Vagina (tissue), 2 donors: ENCODE measurements at regions of chr11 and their contacts with region 1.

Region 1: DNA sequence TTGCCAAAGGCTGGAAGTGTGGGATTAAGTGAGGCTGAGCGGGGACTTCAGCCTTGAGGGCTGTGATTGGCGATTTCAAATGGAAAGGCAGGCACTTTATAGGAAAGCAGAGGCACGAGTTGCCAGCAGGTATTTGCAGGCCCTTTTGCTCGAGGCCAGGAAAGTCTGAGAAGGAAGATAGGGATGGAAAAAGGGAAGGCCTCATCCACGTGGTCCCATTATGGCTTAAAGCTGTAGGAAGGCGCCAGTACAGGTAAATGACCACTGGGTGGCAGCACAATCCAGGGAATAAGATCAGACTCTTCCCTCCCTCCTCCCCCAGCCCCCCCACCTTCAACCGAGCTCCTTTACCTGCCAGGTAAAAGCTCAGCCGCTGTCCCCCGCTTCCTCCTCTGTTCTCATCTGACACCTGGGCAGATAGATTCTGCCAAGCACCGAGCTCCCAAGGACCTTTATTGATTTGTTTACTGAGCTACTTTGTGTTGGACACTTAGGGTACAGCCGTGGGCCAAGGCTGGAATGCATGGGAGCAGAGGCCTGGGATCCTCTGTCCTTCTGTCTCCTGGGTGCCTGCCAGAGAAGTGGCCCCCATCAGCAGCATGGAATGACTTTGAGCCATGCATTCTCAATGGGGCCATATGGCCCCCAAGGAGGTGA is 7.5 kb downstream of the P2RX3 start:
- DNase-seq: no peak
- H3K4me3 ChIP-seq: no peak overlapping the region
- H3K27ac ChIP-seq: no peak overlapping the region
- H3K4me1 ChIP-seq: peaks cover 7% of the 10 kb centered on the region
- H3K27me3 ChIP-seq: no peaks in the 10 kb centered on the region
- CTCF ChIP-seq: peak; percentile 23 to 67 (median 54)
- POLR2A ChIP-seq: no peak

Region 2: GRCh38 chr11:57499413-57499982 is 153.8 kb after region 1 on chr11:
- intact Hi-C with region 1: loop called (anchors 10 kb)
- DNase-seq: peak in 1 of 2 donors; percentile 94
- H3K4me3 ChIP-seq: peak overlapping the region; percentile 33 to 34
- H3K27ac ChIP-seq: peak overlapping the region; percentile 85
- H3K4me1 ChIP-seq: peaks cover 25% of the 10 kb centered on the region
- H3K27me3 ChIP-seq: no peaks in the 10 kb centered on the region
- CTCF ChIP-seq: no peak
- POLR2A ChIP-seq: no peak

Region 3: DNA sequence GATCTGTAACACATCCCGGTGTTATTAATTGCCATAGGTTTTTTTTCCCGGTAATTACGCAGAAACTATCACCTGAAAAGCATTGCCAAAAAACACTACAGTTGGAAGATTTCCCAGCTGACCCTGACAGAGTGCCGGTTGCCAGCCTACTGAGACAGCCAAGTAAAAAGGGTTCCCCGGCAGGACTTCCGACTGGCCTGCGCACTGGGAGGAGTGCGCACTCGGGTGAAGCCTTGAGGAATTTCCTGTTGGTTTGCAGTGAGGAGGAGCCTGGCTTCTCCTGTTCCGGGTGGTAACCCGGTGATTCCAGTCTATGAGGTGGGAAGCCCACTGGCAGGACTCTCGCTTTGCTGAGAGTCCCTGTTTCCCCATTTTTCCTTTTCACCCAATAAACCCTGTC is 1328.9 kb after region 1 on chr11:
- intact Hi-C with region 1: no loop called
- DNase-seq: no peak
- H3K4me3 ChIP-seq: no peak overlapping the region
- H3K27ac ChIP-seq: no peak overlapping the region
- H3K4me1 ChIP-seq: no peaks in the 10 kb centered on the region
- H3K27me3 ChIP-seq: no peaks in the 10 kb centered on the region
- CTCF ChIP-seq: no peak
- POLR2A ChIP-seq: no peak